PC-9 (cell line): ENCODE measurements at regions of chr14 and their contacts with region 1.

Region 1: DNA sequence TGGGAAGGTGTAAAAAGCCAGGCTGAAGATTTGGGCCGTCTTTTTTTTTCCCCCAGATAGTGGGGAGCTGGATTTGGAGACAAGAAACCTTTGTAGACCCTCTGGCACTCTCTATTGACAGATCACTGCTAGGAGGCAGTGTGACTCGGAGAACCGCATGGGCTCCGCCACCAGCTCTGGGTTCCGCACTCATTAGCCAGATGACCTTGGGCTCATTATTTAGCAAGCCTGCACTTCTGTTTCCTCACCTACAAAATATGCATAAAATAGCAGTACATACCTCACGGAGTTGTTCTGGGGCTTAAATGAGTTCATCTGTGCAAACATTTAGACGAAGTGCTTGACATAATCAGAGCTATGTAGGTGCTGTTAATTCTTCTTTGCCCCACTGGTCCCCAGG is 476.5 kb downstream of the DPF3 start:
- DNase-seq: no peak
- H3K4me3 ChIP-seq: no peak overlapping the region
- H3K27ac ChIP-seq: no peak overlapping the region
- H3K4me1 ChIP-seq: no peaks in the 10 kb centered on the region
- H3K27me3 ChIP-seq: peaks cover 47% of the 10 kb centered on the region
- CTCF ChIP-seq: no peak

Region 2: DNA sequence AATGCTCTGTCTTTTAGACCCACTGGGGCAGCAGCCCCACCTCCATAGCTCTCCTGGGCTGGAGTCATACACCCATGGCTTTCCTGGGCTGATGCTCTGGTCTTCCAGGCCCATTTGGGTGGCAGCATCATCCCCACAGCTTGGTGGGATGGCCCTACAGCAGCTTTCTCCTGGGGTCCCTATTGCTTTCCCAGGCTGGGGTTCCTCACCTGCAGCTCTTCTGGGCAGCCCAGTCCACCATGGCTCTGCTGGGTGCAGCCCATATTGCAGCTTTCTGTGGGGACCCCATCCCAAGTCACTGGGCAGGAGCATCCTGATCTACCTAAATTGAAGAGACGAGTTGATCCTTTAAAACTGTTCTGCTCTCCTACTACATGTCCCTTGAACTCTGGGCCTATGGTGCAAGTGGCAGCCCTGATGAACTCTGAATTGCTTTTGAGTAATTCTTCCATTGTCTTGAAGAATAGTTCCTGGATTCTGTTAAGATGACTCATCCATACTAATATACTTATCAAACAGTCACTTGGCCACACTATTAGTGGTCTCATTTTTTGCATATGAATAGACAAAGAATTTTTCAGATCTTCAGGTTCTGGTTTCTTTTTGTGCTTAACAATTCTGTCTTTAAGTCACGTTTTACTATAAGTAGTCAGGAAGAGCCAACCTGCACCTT is 86.4 kb after region 1 on chr14:
- CTCF ChIA-PET with region 1: interaction called, 19 read pairs
- POLR2A ChIA-PET with region 1: no interaction called
- intact Hi-C with region 1: no loop called
- DNase-seq: no peak
- H3K4me3 ChIP-seq: no peak overlapping the region
- H3K27ac ChIP-seq: no peak overlapping the region
- H3K4me1 ChIP-seq: no peaks in the 10 kb centered on the region
- H3K27me3 ChIP-seq: peaks cover 18% of the 10 kb centered on the region
- CTCF ChIP-seq: no peak